ENCODE measurements at regions of chr5 and their contacts with region 1.

Region 1: GRCh38 chr5:5141625-5142532 is 1.7 kb downstream of the ADAMTS16 start:
- DNase-seq: peak; percentile 45
- ATAC-seq: peak; percentile 26; the same call in 1 of the 2 replicates
- H3K4me3 ChIP-seq: no peak overlapping the region
- H3K27ac ChIP-seq: no peak overlapping the region
- H3K4me1 ChIP-seq: peaks cover 10 to 20% of the 10 kb centered on the region in 2 experiments; a peak in 3 of 4 replicates
- H3K27me3 ChIP-seq: no peaks in the 10 kb centered on the region
- CTCF ChIP-seq: peak; percentile 60 to 78 (median 77)
- POLR2A ChIP-seq: no peak
- RAD21 ChIP-seq: peak; percentile 84

Region 2: DNA sequence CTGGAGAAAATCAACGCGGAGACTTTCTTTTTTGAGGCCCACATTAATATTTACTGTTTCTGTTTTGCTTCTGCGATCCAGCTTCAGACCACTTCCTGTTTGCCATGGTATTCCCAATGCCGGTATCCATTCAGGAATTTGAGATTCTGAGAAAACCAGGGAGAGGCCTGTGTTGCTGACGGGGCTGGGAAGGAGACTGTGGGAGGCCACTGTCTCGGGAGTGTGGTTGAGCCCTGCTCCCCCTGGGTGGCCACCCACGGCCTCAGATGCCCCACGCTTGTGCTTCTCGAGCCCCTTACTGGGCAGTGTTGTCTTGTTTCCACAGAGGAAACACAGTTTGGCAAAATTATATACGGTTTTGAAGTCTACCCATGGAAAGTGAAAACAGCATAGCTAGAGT is 1986.8 kb before region 1 on chr5:
- CTCF ChIA-PET with region 1: no interaction called
- POLR2A ChIA-PET with region 1: no interaction called
- RAD21 ChIA-PET with region 1: no interaction called
- intact Hi-C with region 1: no loop called
- DNase-seq: no peak
- ATAC-seq: no peak
- H3K4me3 ChIP-seq: no peak overlapping the region
- H3K27ac ChIP-seq: no peak overlapping the region
- H3K4me1 ChIP-seq: no peaks in the 10 kb centered on the region
- H3K27me3 ChIP-seq: no peaks in the 10 kb centered on the region
- CTCF ChIP-seq: no peak
- POLR2A ChIP-seq: no peak
- RAD21 ChIP-seq: no peak

Region 3: GRCh38 chr5:5270958-5271605 is 129.2 kb after region 1 on chr5:
- CTCF ChIA-PET with region 1: no interaction called
- POLR2A ChIA-PET with region 1: no interaction called
- RAD21 ChIA-PET with region 1: no interaction called
- intact Hi-C with region 1: loop called (anchors 5 kb)
- DNase-seq: peak; percentile 57
- ATAC-seq: peak; percentile 100
- H3K4me3 ChIP-seq: peak overlapping the region; percentile 35 to 49
- H3K27ac ChIP-seq: peak overlapping the region; percentile 67
- H3K4me1 ChIP-seq: peaks cover 13 to 17% of the 10 kb centered on the region in 2 experiments
- H3K27me3 ChIP-seq: no peaks in the 10 kb centered on the region
- CTCF ChIP-seq: no peak
- POLR2A ChIP-seq: no peak
- RAD21 ChIP-seq: no peak

Region 4: GRCh38 chr5:5340206-5340729 is 198.4 kb after region 1 on chr5:
- CTCF ChIA-PET with region 1: no interaction called
- POLR2A ChIA-PET with region 1: no interaction called
- RAD21 ChIA-PET with region 1: no interaction called
- intact Hi-C with region 1: loop called (anchors 2 kb)
- DNase-seq: peak; percentile 80
- ATAC-seq: peak; percentile 92
- H3K4me3 ChIP-seq: no peak overlapping the region; a peak in 1 of 4 replicates
- H3K27ac ChIP-seq: peak overlapping the region; percentile 31
- H3K4me1 ChIP-seq: peaks cover 28 to 36% of the 10 kb centered on the region in 2 experiments
- H3K27me3 ChIP-seq: no peaks in the 10 kb centered on the region
- CTCF ChIP-seq: peak; percentile 32 to 74 (median 73); a peak in 5 of 6 replicates
- POLR2A ChIP-seq: no peak
- RAD21 ChIP-seq: peak; percentile 55

Region 5: DNA sequence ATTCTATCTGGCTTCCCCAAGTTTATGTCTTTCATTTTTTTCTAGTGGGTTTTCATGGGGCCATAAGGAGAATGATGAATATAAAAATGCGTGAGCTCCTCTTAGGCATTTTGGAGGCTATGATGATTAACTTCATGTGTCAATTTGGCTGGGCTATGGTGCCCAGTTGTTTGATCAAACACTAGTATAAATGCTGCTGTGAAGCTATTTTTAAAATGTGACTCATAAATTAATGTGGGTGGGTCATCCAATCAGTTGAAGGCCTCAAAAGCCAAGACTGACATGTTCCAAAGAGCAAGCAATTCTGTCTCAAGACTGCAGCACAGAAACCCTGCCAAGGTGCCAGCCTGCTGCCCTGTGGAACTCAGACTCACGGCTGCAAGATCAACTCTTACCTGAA is 256.2 kb after region 1 on chr5:
- CTCF ChIA-PET with region 1: interaction called, 5 read pairs
- POLR2A ChIA-PET with region 1: interaction called, 3 read pairs
- RAD21 ChIA-PET with region 1: interaction called in 1 of 2 experiments, 3 read pairs
- intact Hi-C with region 1: loop called (anchors 1 kb)
- DNase-seq: no peak
- ATAC-seq: no peak
- H3K4me3 ChIP-seq: no peak overlapping the region
- H3K27ac ChIP-seq: no peak overlapping the region
- H3K4me1 ChIP-seq: peaks cover 0 to 9% of the 10 kb centered on the region in 2 experiments; a peak in 3 of 4 replicates
- H3K27me3 ChIP-seq: no peaks in the 10 kb centered on the region
- CTCF ChIP-seq: no peak
- POLR2A ChIP-seq: no peak
- RAD21 ChIP-seq: no peak